Sciatic nerve (tissue), 2 donors: ENCODE measurements at regions of chr19 and their contacts with region 1.

Region 1: GRCh38 chr19:48965040-48965805 is at the start of gene FTL:
- DNase-seq: peak; percentile 99
- ATAC-seq: peak; percentile 92
- total RNA-seq, gene FTL: 3,094 TPM

Region 2: DNA sequence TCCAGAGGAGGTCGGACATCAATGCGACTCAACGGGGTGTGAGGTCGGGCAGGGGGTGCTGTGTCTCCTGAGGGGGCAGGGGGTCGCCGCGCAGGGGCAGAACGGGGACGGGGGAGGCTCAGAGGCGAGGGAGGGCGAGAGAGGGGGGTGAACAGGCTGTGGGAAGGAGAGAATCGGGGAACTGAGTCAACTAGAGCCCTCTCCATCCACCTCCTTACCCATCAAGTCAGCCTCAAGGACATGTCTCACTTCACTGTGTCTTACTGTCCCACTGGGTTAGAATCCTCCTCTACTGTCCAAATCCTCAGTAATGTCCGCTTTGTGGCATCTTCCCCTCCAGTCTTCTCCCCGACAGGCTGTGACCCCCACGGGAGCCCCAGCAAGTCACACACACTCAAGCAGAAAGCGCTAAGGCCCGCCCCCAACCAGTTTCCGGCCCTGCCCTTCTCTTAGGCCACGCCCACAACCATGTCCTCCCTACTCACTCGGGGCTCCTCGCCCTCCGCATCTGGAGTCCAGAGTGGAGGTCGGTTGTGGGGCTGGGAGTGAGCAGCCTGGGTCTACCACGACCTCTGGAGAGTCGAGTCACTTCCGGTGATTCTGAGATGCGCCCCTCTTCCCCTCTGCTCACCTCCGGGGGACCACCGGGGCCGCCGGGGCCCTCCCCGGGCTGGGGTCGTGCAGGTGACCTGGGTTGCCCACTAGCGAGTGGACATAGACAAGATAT is 106.1 kb before region 1 on chr19:
- intact Hi-C with region 1: loop called (anchors 10 kb)
- DNase-seq: no peak
- ATAC-seq: peak; percentile 73

Region 3: DNA sequence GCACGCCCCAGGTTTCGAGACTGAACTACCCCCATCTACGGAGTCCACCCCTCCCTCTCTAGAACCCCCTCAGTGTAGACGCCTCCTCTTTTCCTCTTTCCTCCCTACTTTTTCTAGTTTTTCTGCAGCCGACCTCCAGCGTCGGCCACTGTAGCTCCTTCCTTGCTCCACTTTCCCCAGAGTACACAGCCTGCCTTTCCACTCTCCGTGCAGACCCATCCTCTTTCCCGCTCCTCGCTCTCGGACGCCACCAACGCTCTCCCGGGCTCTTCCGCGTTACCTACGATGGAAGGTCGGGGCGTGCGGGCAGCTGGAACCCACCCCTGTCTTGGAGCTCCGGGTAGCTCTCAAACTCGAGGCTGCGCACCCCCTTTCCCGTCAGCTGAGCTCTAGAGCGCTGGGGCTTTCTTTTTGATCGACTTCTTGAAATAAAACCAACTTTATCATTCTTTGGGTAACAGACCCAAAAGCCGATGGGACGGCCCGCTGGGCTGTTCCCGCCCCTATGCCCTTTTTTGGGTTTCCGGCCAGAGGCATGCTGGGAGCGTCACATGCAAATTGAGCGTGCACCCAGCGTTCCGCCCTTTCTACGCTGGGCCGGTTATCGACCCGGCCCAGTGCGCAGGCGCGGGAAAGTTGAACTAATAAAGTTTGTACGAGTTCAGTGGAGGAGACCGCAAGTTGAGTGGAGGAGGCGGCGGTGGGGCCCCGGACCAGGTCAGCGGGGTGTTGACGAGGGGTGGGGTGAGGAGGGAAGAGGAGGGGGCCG is 700.3 kb after region 1 on chr19 and contains the starts of genes BCL2L12 and IRF3:
- intact Hi-C with region 1: no loop called
- DNase-seq: peak; percentile 100
- ATAC-seq: peak; percentile 97
- total RNA-seq, gene BCL2L12: 11.5 TPM
- total RNA-seq, gene IRF3: 76.7 TPM